ENCODE measurements at regions of chr22 and their contacts with region 1.

Region 1: DNA sequence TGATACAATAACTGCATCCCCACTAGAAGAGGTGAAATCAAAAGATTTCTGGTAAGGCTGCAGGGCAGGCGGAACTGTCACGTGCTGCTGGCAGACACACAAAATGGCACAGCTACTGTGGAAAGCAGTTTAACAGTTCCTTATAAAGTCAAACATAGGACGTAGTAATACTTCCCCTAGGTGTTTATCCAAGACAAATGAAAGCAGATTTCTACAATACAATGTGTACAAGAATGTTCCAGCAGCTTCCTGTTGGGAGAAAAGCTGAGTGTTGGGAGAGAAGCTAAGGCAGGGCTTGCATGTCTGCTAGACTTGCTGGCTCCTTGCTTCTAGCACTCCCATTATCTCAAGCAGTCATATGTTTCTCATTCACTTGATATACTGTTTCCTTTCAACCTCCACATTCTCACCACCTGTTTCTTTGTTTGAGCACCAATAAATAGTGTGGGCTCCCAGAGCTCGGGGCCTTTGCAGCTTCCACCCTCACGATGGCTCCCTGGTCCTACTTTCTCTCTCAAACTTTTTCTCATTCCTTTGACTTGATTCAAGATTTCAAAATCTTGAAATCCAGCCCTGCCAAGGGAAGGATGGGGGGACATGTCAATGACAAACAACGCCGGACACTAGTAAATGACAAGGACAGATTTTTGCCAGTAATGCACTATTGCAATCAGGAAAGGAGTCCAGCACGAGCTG is 21.2 kb upstream of the IL17RA start:
- DNase-seq: no peak
- ATAC-seq: no peak
- H3K4me3 ChIP-seq: no peak overlapping the region
- H3K27ac ChIP-seq: no peak overlapping the region
- H3K4me1 ChIP-seq: no peaks in the 10 kb centered on the region
- CTCF ChIP-seq: no peak
- EP300 ChIP-seq: no peak
- POLR2A ChIP-seq: no peak
- RAD21 ChIP-seq: no peak

Region 2: DNA sequence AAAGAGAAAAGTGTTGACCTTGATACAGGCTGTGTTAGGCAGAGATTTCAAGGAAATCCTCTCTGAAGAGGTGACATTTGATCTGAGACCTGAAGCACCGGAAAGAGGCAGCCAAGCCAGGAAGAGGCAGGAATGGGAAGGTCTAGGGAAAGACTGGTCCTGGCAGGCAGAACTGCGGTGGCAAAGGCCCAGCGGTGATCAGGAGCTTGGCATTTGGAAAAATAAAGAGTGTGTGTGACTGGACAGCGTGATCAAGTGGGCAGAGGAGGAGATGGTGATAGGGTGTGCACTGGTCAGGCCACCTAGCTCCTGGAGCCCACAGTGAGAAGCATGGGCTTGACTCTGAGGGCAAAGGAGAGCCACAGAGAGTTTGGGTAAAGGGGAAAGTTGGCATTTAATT is 28.3 kb before region 1 on chr22:
- CTCF ChIA-PET with region 1: interaction called, 7 read pairs
- POLR2A ChIA-PET with region 1: interaction called, 12 read pairs
- DNase-seq: no peak
- ATAC-seq: no peak
- H3K4me3 ChIP-seq: no peak overlapping the region
- H3K27ac ChIP-seq: no peak overlapping the region
- H3K4me1 ChIP-seq: peaks cover 8% of the 10 kb centered on the region; the same call in 2 of the 3 replicates
- CTCF ChIP-seq: no peak
- EP300 ChIP-seq: no peak
- POLR2A ChIP-seq: no peak
- RAD21 ChIP-seq: no peak